ENCODE measurements at regions of chr11 and their contacts with region 1.

Region 1: GRCh38 chr11:86193297-86194095 is 51.1 kb upstream of the EED start:
- DNase-seq: peak; percentile 84
- ATAC-seq: peak; percentile 100
- H3K4me3 Mint-ChIP-seq: peak overlapping the region; percentile 63
- H3K27ac Mint-ChIP-seq: peak overlapping the region; percentile 84
- H3K4me1 Mint-ChIP-seq: peaks cover 22% of the 10 kb centered on the region
- H3K27me3 Mint-ChIP-seq: peaks cover 5% of the 10 kb centered on the region
- CTCF ChIP-seq: peak; percentile 81

Region 2: GRCh38 chr11:86068951-86069407 is 124.5 kb before region 1 on chr11 and contains the start of gene PICALM:
- CTCF ChIA-PET with region 1: interaction called, 42 read pairs
- POLR2A ChIA-PET with region 1: interaction called, 13 read pairs
- intact Hi-C with region 1: loop called (anchors 5 kb)
- DNase-seq: peak; percentile 98
- ATAC-seq: peak; percentile 91
- H3K4me3 Mint-ChIP-seq: peak within 1 kb of the TSS; percentile 100
- H3K27ac Mint-ChIP-seq: peak within 1 kb of the TSS; percentile 98
- H3K4me1 Mint-ChIP-seq: peaks cover 21% of the 10 kb centered on the region
- H3K27me3 Mint-ChIP-seq: no peaks in the 10 kb centered on the region
- CTCF ChIP-seq: no peak
- total RNA-seq, gene PICALM: 57.5 to 61.2 TPM

Region 3: GRCh38 chr11:86138958-86139357 is 54.5 kb before region 1 on chr11:
- CTCF ChIA-PET with region 1: interaction called, 15 read pairs
- POLR2A ChIA-PET with region 1: no interaction called
- intact Hi-C with region 1: no loop called
- DNase-seq: peak; percentile 53
- ATAC-seq: peak; percentile 84
- H3K4me3 Mint-ChIP-seq: peak overlapping the region; percentile 9
- H3K27ac Mint-ChIP-seq: peak overlapping the region; percentile 77
- H3K4me1 Mint-ChIP-seq: peaks cover 32% of the 10 kb centered on the region
- H3K27me3 Mint-ChIP-seq: no peaks in the 10 kb centered on the region
- CTCF ChIP-seq: no peak

Region 4: DNA sequence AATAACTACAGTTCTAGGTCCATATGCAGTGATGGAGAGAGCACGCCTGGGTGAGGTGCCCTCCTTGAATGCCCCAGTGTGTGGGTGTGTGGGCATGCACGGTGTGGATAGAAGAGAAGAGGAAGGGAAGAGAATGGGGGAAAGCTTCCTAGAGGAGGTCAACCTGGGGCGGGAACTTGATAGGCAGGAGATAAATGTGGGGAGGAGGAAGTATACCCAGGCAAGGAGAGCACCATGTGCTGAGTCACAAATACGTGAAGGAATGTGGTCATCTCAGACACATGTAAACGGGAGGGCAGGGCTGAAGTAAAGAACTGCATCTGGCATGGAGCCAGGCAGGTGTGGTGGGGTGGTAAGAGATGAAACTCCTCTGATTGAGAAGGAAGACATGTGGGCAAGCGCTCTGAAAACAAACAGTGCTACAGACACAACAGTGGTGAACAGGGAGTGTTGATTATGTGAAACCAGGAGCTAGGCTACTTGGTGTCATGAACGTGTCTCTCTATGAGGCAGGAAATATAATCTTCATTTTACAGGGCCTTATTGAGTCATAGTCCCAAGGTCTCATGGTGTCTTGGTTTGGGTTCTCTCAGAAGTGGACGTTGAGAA is 10.4 kb before region 1 on chr11:
- CTCF ChIA-PET with region 1: interaction called, 31 read pairs
- POLR2A ChIA-PET with region 1: interaction called, 5 read pairs
- intact Hi-C with region 1: no loop called
- DNase-seq: peak; percentile 91
- ATAC-seq: peak; percentile 81
- H3K4me3 Mint-ChIP-seq: no peak overlapping the region
- H3K27ac Mint-ChIP-seq: no peak overlapping the region
- H3K4me1 Mint-ChIP-seq: peaks cover 11% of the 10 kb centered on the region
- H3K27me3 Mint-ChIP-seq: no peaks in the 10 kb centered on the region
- CTCF ChIP-seq: no peak

Region 5: GRCh38 chr11:86244522-86245368 is 51.2 kb after region 1 on chr11 and contains the start of gene EED:
- CTCF ChIA-PET with region 1: interaction called, 11 read pairs
- POLR2A ChIA-PET with region 1: interaction called, 6 read pairs
- intact Hi-C with region 1: no loop called
- DNase-seq: peak; percentile 95
- ATAC-seq: peak; percentile 87
- H3K4me3 Mint-ChIP-seq: no peak within 1 kb of the TSS
- H3K27ac Mint-ChIP-seq: no peak within 1 kb of the TSS
- H3K4me1 Mint-ChIP-seq: peaks cover 32% of the 10 kb centered on the region
- H3K27me3 Mint-ChIP-seq: no peaks in the 10 kb centered on the region
- CTCF ChIP-seq: no peak
- total RNA-seq, gene EED: 114 to 117 TPM

Region 6: GRCh38 chr11:86386746-86387145 is 193.2 kb after region 1 on chr11:
- CTCF ChIA-PET with region 1: no interaction called
- POLR2A ChIA-PET with region 1: no interaction called
- intact Hi-C with region 1: no loop called
- DNase-seq: no peak
- ATAC-seq: no peak
- H3K4me3 Mint-ChIP-seq: no peak overlapping the region
- H3K27ac Mint-ChIP-seq: no peak overlapping the region
- H3K4me1 Mint-ChIP-seq: no peaks in the 10 kb centered on the region
- H3K27me3 Mint-ChIP-seq: no peaks in the 10 kb centered on the region
- CTCF ChIP-seq: no peak

Region 7: DNA sequence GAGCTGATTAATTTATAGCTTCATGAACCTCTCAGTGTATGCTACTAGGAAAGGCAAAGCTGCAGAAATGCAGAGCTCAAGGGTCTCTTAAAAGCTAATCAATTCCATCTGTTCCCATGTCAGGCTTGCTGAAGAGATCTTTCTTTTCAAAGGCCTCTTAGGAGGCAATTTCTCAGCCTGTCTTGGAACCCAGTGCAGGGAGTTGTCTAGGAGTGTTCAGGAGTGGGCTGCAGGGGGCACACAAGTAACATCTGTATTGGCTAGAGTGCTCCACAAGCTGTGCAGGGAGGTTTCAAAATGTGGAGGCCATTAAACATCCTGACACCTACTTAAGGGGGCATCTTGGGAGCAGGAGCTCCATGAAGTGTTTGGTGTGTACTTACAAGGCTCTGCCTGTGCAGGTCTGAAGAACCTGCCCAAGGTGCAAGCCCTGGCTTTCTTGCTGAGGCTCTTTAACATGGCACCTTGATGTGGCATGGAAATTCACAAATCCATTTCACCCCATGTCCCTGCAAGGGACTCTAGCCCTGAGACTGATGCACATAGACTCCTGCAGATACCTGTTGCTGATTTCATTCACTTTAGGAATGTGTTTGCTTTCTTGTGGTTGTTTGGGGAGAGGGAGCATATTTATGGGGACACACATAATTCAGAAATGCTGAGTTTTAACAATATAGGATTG is 344.2 kb after region 1 on chr11:
- CTCF ChIA-PET with region 1: no interaction called
- POLR2A ChIA-PET with region 1: no interaction called
- intact Hi-C with region 1: no loop called
- DNase-seq: no peak
- ATAC-seq: no peak
- H3K4me3 Mint-ChIP-seq: no peak overlapping the region
- H3K27ac Mint-ChIP-seq: no peak overlapping the region
- H3K4me1 Mint-ChIP-seq: no peaks in the 10 kb centered on the region
- H3K27me3 Mint-ChIP-seq: peaks cover 2% of the 10 kb centered on the region
- CTCF ChIP-seq: no peak

Measured in activated CD8-positive, alpha-beta T cell treated with anti-CD3 and anti-CD28 coated beads for 36 hours (primary cell).